AG04449 (cell line): ENCODE measurements at regions of chr3 and their contacts with region 1.

Region 1: DNA sequence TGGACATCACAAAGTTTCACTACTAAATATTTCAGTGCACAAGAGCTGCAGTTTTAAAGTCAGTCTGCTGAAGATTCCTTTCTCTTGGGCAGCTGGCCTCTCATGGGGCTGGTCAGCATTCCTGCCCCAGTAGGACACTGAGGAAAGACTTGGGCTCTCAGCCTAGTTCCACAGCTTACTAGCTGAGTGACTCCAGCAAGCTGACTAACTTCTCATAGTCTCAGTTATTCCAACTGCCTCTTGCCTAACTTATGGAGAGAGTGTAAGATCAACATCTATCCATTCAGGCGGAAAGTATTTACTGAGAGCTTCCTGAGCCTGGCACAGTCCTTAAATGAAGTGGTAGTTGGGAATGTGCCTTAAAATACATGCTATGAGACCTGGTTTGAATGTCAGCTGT is 27.0 kb downstream of the TM4SF4 start:
- DNase-seq: peak; percentile 89
- H3K4me3 ChIP-seq: no peak overlapping the region
- CTCF ChIP-seq: no peak

Region 2: DNA sequence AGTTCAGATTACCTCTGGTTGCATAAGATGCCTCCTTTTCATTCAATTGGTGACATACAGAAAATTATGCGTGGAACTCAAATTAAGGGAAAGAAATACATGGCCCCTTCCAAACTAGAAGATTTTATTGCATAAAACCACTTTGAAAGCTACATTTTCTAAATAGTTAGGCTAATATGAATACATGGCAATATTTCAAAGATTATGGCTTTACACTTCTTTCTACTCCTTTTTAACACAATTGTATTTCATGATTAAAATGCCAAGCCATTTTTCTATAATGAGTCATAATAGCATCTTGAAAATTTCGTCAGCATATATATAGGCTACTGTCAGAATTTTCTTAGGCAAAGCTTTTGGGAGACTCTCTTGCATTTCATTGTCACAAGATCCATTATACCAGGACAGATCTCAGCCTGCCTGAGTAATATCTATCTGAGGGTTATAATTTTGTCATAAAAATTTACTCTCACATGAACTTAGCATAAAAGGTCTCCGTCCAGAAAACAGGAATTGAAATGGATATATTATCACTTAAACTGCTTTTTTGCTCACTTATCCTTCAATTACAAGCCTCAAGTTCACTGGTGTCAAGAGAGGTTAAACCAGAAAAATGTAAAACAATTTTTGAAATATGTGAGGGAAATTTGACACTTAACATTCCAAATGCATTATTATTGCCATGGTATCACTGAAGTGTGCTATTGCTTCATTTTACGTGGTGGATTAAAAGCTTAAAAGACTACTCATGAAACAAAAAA is 599.3 kb before region 1 on chr3:
- CTCF ChIA-PET with region 1: no interaction called
- POLR2A ChIA-PET with region 1: no interaction called
- DNase-seq: peak; percentile 65
- H3K4me3 ChIP-seq: no peak overlapping the region
- CTCF ChIP-seq: no peak

Region 3: GRCh38 chr3:149216193-149216869 is 285.2 kb before region 1 on chr3:
- CTCF ChIA-PET with region 1: no interaction called
- POLR2A ChIA-PET with region 1: no interaction called
- DNase-seq: no peak
- H3K4me3 ChIP-seq: no peak overlapping the region
- CTCF ChIP-seq: no peak

Region 4: GRCh38 chr3:149512209-149512782 is 10.8 kb after region 1 on chr3:
- CTCF ChIA-PET with region 1: interaction called, 16 read pairs
- POLR2A ChIA-PET with region 1: no interaction called
- DNase-seq: no peak
- H3K4me3 ChIP-seq: no peak overlapping the region
- CTCF ChIP-seq: peak; percentile 75

Region 5: DNA sequence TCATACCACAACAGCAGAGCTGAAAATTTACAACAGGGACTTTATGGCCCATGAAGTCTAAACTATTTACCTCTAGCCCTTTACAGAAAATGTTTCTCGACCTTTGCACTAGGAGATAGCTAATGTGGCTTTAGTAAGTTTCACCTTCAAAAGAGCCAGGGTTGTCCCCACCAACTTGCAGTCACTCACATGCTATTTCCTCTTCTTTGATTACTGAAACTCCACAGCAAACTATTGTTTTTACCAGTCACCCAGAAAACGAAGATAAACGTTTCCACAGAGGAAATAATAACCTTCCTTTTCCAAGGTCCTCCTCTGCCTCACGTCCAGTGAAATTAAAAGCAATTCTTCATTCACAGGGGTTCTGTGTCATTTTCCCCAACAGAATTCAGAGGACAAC is 108.1 kb after region 1 on chr3:
- CTCF ChIA-PET with region 1: no interaction called
- POLR2A ChIA-PET with region 1: no interaction called
- DNase-seq: no peak
- H3K4me3 ChIP-seq: no peak overlapping the region
- CTCF ChIP-seq: no peak